ENCODE measurements at regions of chr15 and their contacts with region 1.

Region 1: DNA sequence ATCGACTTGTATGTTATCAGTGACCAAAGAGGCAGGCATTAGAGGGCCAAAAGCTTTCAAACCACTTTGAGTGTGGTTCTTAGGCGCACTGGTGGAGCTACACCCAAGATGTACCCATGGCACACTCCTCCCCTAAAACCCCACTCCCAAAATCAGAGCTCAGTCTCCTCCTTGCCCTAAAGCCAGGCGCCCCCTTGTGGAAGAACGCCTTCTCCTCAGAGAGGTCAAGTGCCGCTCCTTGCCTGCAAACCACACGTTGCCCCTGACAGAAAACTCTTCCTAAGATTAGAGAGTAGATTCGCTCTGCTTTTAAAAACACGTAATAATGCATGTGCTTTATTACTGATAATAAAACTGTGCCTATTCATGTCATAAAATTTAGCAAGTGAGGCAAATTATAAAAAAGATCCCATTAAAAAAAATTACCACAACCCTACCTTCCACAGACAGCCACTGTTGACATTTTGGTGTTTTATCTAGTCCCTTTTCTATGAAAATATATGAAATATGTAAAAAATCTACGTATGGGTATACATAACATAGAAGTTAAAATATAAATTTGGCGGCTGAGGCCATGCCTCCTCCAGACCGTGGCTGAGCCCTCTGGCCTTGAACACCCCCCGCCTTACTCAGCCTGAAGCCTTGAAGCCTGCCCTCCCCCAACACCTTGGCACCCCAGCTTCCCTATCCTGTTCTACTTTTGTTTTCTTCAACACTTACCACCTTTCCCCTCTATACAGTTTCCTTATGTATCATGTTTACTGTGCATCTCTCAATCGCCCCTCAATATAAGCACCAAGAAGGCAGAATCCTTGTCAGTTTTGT is 33.5 kb downstream of the BCL2L10 start:
- DNase-seq: peak; percentile 71
- H3K4me3 ChIP-seq: no peak overlapping the region
- H3K27ac ChIP-seq: no peak overlapping the region
- H3K4me1 ChIP-seq: no peaks in the 10 kb centered on the region
- H3K27me3 ChIP-seq: no peaks in the 10 kb centered on the region
- CTCF ChIP-seq: peak; percentile 53 to 80 (median 68)
- POLR2A ChIP-seq: no peak

Region 2: GRCh38 chr15:51888593-51889195 is 190.4 kb before region 1 on chr15:
- intact Hi-C with region 1: loop called (anchors 10 kb)
- DNase-seq: no peak
- H3K4me3 ChIP-seq: no peak overlapping the region
- H3K27ac ChIP-seq: no peak overlapping the region
- H3K4me1 ChIP-seq: no peaks in the 10 kb centered on the region
- H3K27me3 ChIP-seq: no peaks in the 10 kb centered on the region
- CTCF ChIP-seq: peak in 3 of 4 experiments; percentile 55 to 71 (median 63)
- POLR2A ChIP-seq: no peak

Region 3: GRCh38 chr15:51917493-51917892 is 161.6 kb before region 1 on chr15:
- intact Hi-C with region 1: no loop called
- DNase-seq: no peak
- H3K4me3 ChIP-seq: no peak overlapping the region
- H3K27ac ChIP-seq: no peak overlapping the region
- H3K4me1 ChIP-seq: no peaks in the 10 kb centered on the region
- H3K27me3 ChIP-seq: no peaks in the 10 kb centered on the region
- CTCF ChIP-seq: no peak
- POLR2A ChIP-seq: no peak

Region 4: GRCh38 chr15:51982013-51982769 is 96.9 kb before region 1 on chr15:
- intact Hi-C with region 1: loop called (anchors 5 kb)
- DNase-seq: peak; percentile 26
- H3K4me3 ChIP-seq: no peak overlapping the region
- H3K27ac ChIP-seq: peak overlapping the region; percentile 33 to 51
- H3K4me1 ChIP-seq: no peaks in the 10 kb centered on the region
- H3K27me3 ChIP-seq: no peaks in the 10 kb centered on the region
- CTCF ChIP-seq: peak in 3 of 4 experiments; percentile 12 to 59 (median 55)
- POLR2A ChIP-seq: no peak

Region 5: GRCh38 chr15:52139599-52140491 is 60.8 kb after region 1 on chr15:
- intact Hi-C with region 1: loop called (anchors 10 kb)
- DNase-seq: peak; percentile 56
- H3K4me3 ChIP-seq: no peak overlapping the region
- H3K27ac ChIP-seq: no peak overlapping the region
- H3K4me1 ChIP-seq: no peaks in the 10 kb centered on the region
- H3K27me3 ChIP-seq: no peaks in the 10 kb centered on the region
- CTCF ChIP-seq: peak; percentile 66 to 85 (median 70)
- POLR2A ChIP-seq: no peak